Activated CD8-positive, alpha-beta T cell treated with anti-CD3 and anti-CD28 coated beads for 36 hours (primary cell): ENCODE measurements at regions of chr10 and their contacts with region 1.

Region 1: GRCh38 chr10:71812016-71812912 is 38.8 kb downstream of the PSAP start:
- DNase-seq: peak; percentile 84
- ATAC-seq: peak; percentile 98
- H3K4me3 Mint-ChIP-seq: no peak overlapping the region
- H3K27ac Mint-ChIP-seq: no peak overlapping the region
- H3K4me1 Mint-ChIP-seq: peaks cover 3% of the 10 kb centered on the region
- H3K27me3 Mint-ChIP-seq: no peaks in the 10 kb centered on the region
- CTCF ChIP-seq: peak; percentile 94

Region 2: DNA sequence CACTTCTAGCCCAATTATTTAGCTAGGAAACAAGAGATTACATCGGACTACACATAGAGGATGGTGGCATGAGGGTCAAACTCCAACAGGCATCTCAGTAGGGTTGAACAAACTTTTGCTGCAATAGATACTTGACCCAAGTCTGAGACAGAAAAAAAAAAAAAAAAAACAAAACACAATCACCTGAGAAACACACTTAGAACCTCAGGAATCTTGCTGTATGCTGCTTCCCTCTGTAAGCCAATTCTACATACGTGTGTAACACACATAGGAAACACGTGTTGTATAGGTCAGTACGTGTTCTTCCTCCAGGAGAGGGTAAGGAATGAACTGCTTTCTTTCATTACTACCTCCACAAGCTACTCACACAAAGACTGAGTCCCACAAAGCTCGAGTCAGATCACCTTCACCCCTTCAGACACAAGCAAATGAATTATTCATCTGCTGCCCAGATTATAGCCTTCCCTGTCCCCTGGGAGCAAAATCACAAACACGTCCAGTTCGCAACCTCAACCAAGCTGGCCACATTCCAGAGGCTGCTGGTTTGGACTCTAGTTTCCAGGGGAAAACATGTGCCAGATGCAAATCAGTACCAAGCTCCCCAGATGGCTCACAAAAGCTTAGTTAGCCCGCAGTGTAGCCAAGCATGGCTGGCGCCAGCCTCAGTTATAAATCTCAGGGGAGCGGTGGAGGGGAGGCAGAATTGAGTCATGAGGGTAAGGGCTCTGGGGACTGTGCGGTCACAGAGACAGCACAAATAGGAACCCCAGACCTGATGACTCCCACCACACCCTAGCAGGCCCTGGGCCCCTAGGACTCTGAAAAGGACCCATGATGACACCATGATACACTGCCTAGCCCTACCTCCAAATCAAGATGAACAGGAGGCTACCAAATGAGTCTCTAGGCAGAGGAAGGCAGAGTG is 23.7 kb after region 1 on chr10:
- CTCF ChIA-PET with region 1: interaction called, 10 read pairs
- POLR2A ChIA-PET with region 1: no interaction called
- intact Hi-C with region 1: no loop called
- DNase-seq: peak; percentile 39
- ATAC-seq: peak; percentile 70
- H3K4me3 Mint-ChIP-seq: no peak overlapping the region
- H3K27ac Mint-ChIP-seq: peak overlapping the region; percentile 23
- H3K4me1 Mint-ChIP-seq: peaks cover 55% of the 10 kb centered on the region
- H3K27me3 Mint-ChIP-seq: no peaks in the 10 kb centered on the region
- CTCF ChIP-seq: no peak

Region 3: GRCh38 chr10:71860243-71861029 is 48.2 kb after region 1 on chr10:
- CTCF ChIA-PET with region 1: no interaction called
- POLR2A ChIA-PET with region 1: no interaction called
- intact Hi-C with region 1: no loop called
- DNase-seq: peak; percentile 53
- ATAC-seq: peak; percentile 87
- H3K4me3 Mint-ChIP-seq: no peak overlapping the region
- H3K27ac Mint-ChIP-seq: peak overlapping the region; percentile 71
- H3K4me1 Mint-ChIP-seq: peaks cover 3% of the 10 kb centered on the region
- H3K27me3 Mint-ChIP-seq: no peaks in the 10 kb centered on the region
- CTCF ChIP-seq: no peak

Region 4: GRCh38 chr10:71927776-71928592 is 115.7 kb after region 1 on chr10:
- CTCF ChIA-PET with region 1: no interaction called
- POLR2A ChIA-PET with region 1: no interaction called
- intact Hi-C with region 1: no loop called
- DNase-seq: no peak
- ATAC-seq: no peak
- H3K4me3 Mint-ChIP-seq: no peak overlapping the region
- H3K27ac Mint-ChIP-seq: no peak overlapping the region
- H3K4me1 Mint-ChIP-seq: peaks cover 6% of the 10 kb centered on the region
- H3K27me3 Mint-ChIP-seq: no peaks in the 10 kb centered on the region
- CTCF ChIP-seq: no peak

Region 5: DNA sequence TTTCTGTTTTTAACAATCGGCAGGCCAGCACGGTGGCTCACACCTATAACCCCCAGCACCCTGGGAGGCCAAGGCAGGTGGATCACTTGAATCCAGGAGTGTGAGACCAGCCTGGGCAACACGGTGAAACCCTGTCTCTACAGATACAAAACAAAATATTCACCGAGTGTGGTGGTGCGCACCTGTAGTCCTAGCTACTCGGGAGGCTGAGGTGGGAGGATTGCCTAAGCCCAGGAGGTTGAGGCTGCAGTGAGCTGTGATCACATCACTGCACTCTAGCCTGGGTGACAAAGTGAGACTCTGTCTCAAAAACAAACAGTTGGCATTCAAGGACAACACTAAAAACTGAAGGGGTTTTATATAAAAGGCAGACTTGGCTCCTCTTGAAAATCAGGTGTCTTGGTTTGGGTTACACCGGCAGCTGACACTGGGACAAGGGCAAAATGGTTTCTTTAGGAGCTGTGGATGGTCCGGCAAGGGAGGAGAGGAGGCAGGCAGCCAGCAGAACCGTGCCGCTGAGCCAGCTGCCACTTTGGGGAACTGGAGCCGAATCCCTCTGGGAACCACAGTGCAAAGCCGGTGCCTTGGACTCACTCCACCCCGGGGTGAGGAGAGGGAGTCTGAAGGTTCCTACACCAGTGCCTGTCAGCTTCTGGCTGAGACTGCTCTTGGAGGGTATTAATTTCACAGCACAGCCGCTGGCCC is 204.5 kb after region 1 on chr10:
- CTCF ChIA-PET with region 1: no interaction called
- POLR2A ChIA-PET with region 1: no interaction called
- intact Hi-C with region 1: no loop called
- DNase-seq: no peak
- ATAC-seq: no peak
- H3K4me3 Mint-ChIP-seq: no peak overlapping the region
- H3K27ac Mint-ChIP-seq: no peak overlapping the region
- H3K4me1 Mint-ChIP-seq: no peaks in the 10 kb centered on the region
- H3K27me3 Mint-ChIP-seq: no peaks in the 10 kb centered on the region
- CTCF ChIP-seq: no peak